IMR-90 (cell line): ENCODE measurements at regions of chr4 and their contacts with region 1.

Region 1: GRCh38 chr4:186845137-186845842 is 121.6 kb upstream of the FAT1 start:
- DNase-seq: peak; percentile 97
- ATAC-seq: peak; percentile 86
- H3K4me3 ChIP-seq: no peak overlapping the region
- H3K27ac ChIP-seq: peak overlapping the region; percentile 79
- H3K4me1 ChIP-seq: peaks cover 20% of the 10 kb centered on the region
- H3K27me3 ChIP-seq: no peaks in the 10 kb centered on the region
- CTCF ChIP-seq: no peak
- POLR2A ChIP-seq: no peak
- RAD21 ChIP-seq: peak; percentile 15; the same call in 1 of the 2 replicates

Region 2: GRCh38 chr4:186936496-186937375 is 91.4 kb after region 1 on chr4:
- CTCF ChIA-PET with region 1: no interaction called
- POLR2A ChIA-PET with region 1: no interaction called
- dilution Hi-C with region 1: no loop called
- in situ Hi-C with region 1: no loop called
- intact Hi-C with region 1: loop called (anchors 1 kb)
- DNase-seq: peak; percentile 88
- ATAC-seq: peak; percentile 76
- H3K4me3 ChIP-seq: peak overlapping the region; percentile 43; the same call in 1 of the 2 replicates
- H3K27ac ChIP-seq: peak overlapping the region; percentile 60; the same call in 1 of the 2 replicates
- H3K4me1 ChIP-seq: peaks cover 15% of the 10 kb centered on the region
- H3K27me3 ChIP-seq: no peaks in the 10 kb centered on the region
- CTCF ChIP-seq: peak; percentile 47
- POLR2A ChIP-seq: no peak
- RAD21 ChIP-seq: peak; percentile 65